Activated B cell treated with CpG ODN at 0.5 μM for 24 hours (primary cell): ENCODE measurements at regions of chr7 and their contacts with region 1.

Region 1: GRCh38 chr7:40134428-40135316 is at the starts of genes MPLKIP and SUGCT:
- DNase-seq: peak; percentile 91
- ATAC-seq: peak; percentile 90
- H3K4me3 Mint-ChIP-seq: peak within 1 kb of the TSS; percentile 97
- H3K27ac Mint-ChIP-seq: peak within 1 kb of the TSS; percentile 97
- H3K4me1 Mint-ChIP-seq: peaks cover 35% of the 10 kb centered on the region
- H3K27me3 Mint-ChIP-seq: no peaks in the 10 kb centered on the region
- CTCF ChIP-seq: no peak
- total RNA-seq, gene MPLKIP: 29.9 and 35.1 TPM in 2 replicates
- total RNA-seq, gene SUGCT: 0.61 and 1.3 TPM in 2 replicates

Region 2: DNA sequence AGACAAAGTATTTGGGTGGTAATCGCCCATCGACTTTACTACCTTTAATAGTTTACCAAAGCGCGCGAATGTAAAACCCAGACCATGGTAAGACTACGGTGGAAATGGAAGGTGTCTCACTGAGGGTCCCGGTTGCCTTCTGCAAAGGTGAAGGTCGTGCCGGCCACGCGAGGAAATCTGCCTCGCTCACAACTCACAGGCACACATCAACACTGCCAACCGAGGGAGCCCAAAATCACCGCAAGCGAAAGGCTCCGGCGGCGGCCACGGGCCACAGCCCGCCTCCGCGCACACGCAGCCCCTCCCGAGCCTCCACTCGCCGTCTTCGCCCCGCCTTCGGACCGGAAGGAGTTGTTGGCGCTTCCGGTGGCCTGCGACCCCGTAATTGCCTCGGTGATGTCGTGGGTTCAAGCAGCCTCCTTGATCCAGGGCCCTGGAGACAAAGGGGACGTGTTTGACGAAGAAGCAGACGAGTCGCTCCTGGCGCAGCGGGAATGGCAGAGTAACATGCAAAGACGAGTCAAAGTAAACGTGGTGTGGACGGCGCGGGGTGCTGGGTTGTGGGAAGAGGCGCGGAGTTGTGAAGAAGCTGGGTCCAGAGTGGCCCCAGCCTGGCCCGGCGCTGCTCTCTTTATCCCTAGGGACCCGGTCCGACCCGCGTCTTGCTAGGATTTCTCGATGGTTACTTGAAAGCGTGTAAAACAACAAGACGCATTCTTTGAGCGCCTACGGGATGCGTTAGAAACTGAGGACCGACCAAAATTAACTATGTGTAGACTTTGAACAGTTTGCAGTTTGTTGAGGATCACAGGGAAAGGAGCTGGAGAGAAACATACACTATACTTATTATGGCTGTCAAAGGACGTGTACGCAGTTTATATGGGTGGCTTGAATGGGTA is 568.4 kb before region 1 on chr7 and contains the start of gene YAE1:
- CTCF ChIA-PET with region 1: no interaction called
- POLR2A ChIA-PET with region 1: no interaction called
- intact Hi-C with region 1: loop called (anchors 1 kb)
- DNase-seq: peak; percentile 79
- ATAC-seq: peak; percentile 96
- H3K4me3 Mint-ChIP-seq: peak within 1 kb of the TSS; percentile 99
- H3K27ac Mint-ChIP-seq: peak within 1 kb of the TSS; percentile 91
- H3K4me1 Mint-ChIP-seq: peaks cover 22% of the 10 kb centered on the region
- H3K27me3 Mint-ChIP-seq: peaks cover 1% of the 10 kb centered on the region
- CTCF ChIP-seq: no peak
- total RNA-seq, gene YAE1: 13.3 and 16.1 TPM in 2 replicates